ENCODE measurements at regions of chr5 and their contacts with region 1.

Region 1: GRCh38 chr5:76582230-76583162 is 40.7 kb downstream of the F2RL2 start:
- DNase-seq: peak; percentile 59
- H3K4me3 Mint-ChIP-seq: no peak overlapping the region
- H3K27ac Mint-ChIP-seq: peak overlapping the region; percentile 66
- H3K4me1 Mint-ChIP-seq: peaks cover 27% of the 10 kb centered on the region
- H3K27me3 Mint-ChIP-seq: no peaks in the 10 kb centered on the region

Region 2: GRCh38 chr5:76337953-76338451 is 244.5 kb before region 1 on chr5:
- CTCF ChIA-PET with region 1: interaction called, 3 read pairs
- POLR2A ChIA-PET with region 1: no interaction called
- intact Hi-C with region 1: loop called (anchors 2 kb)
- DNase-seq: peak; percentile 51
- H3K4me3 Mint-ChIP-seq: no peak overlapping the region
- H3K27ac Mint-ChIP-seq: no peak overlapping the region
- H3K4me1 Mint-ChIP-seq: peaks cover 27% of the 10 kb centered on the region
- H3K27me3 Mint-ChIP-seq: no peaks in the 10 kb centered on the region

Region 3: GRCh38 chr5:76521240-76521758 is 61.2 kb before region 1 on chr5:
- CTCF ChIA-PET with region 1: interaction called, 3 read pairs
- POLR2A ChIA-PET with region 1: interaction called, 4 read pairs
- intact Hi-C with region 1: loop called (anchors 1 kb)
- DNase-seq: no peak
- H3K4me3 Mint-ChIP-seq: peak overlapping the region; percentile 30
- H3K27ac Mint-ChIP-seq: peak overlapping the region; percentile 91
- H3K4me1 Mint-ChIP-seq: peaks cover 83% of the 10 kb centered on the region
- H3K27me3 Mint-ChIP-seq: no peaks in the 10 kb centered on the region

Region 4: GRCh38 chr5:76535577-76535976 is 46.9 kb before region 1 on chr5:
- CTCF ChIA-PET with region 1: no interaction called
- POLR2A ChIA-PET with region 1: no interaction called
- intact Hi-C with region 1: no loop called
- DNase-seq: no peak
- H3K4me3 Mint-ChIP-seq: no peak overlapping the region
- H3K27ac Mint-ChIP-seq: peak overlapping the region; percentile 16
- H3K4me1 Mint-ChIP-seq: peaks cover 67% of the 10 kb centered on the region
- H3K27me3 Mint-ChIP-seq: no peaks in the 10 kb centered on the region